GM10248 (cell line): ENCODE measurements at regions of chr6 and their contacts with region 1.

Region 1: DNA sequence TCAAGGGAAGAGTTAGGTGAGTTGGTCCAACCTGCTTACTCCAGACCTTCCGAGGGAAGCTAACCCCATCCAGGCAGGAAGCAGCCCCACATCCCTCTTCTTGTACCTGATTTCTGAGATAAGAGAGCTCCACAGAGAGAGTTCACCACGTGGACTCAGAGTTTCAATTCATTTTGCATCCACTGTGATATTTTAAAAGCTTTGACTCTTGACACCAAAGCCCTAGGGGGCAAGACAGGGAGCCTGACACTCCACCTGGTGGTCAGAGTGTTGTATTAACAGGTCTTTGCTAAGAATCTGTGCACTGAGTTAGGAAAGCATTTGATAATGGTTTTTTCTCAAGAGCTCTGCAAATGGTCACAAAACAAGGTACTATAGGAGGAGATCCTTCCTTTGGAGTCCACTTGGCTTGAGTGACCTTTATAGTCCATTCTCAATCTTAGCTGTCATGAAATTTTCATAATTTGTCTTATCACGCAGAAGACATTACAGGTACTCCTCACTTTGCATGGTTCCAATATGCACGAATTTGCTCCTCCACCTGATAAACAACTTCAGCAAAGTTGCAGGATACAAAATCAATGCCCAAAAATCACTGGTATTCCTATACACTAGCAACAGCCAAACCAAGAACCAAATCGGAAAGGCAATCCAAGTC is 56.2 kb upstream of the RIPOR2 start:
- DNase-seq: peak; percentile 68
- CTCF ChIP-seq: peak; percentile 79

Region 2: GRCh38 chr6:24864343-24864742 is 127.6 kb before region 1 on chr6:
- CTCF ChIA-PET with region 1: interaction called, 18 read pairs
- POLR2A ChIA-PET with region 1: no interaction called
- DNase-seq: no peak
- CTCF ChIP-seq: no peak

Region 3: DNA sequence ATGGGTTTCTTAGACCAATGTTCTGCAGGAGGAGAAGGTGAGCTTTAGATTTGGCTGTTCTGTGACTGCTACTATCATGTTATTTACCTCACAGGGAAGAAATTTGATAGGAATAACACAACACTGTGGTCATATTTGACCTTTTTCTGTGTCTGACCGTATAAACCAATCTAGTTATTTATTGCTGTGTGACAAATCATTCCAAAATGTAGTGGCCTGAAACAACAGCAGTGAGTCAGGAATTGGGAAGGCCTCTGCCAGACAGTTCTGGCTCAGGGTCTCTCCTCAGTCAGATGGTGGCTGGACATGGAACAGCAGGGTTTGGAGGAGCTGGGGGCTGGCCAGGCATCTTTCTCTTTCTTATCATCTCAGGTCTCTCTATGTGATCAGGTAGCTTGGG is 89.2 kb before region 1 on chr6:
- CTCF ChIA-PET with region 1: interaction called, 24 read pairs
- POLR2A ChIA-PET with region 1: no interaction called
- DNase-seq: no peak
- CTCF ChIP-seq: no peak

Region 4: DNA sequence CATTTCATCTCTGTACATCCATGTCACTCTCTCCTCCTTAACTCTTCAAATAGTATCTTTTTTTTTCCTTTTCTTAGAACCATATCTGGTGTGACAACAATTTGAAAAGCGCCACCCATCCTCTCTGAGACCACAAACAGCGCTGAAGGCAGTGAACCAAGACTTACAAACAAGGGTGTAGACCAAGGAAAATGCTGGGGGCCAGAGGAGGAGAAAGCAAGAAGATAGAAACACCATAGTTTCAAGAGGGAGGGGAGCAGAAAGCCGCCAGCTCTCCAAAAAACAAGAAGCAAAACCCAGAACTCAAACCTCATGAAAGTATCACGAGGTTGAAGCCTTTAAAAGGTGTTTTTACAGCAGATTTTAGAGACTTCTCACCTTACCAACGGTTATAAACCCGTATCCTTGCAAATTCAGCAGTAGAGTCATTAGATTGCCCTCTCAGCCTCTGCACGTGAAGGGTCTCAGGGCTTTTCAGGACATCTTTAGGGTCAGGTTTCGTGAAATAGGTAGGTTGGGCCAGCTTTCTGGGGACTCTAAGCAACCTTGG is 42.8 kb before region 1 on chr6:
- CTCF ChIA-PET with region 1: interaction called, 16 read pairs
- POLR2A ChIA-PET with region 1: no interaction called
- DNase-seq: peak; percentile 72
- CTCF ChIP-seq: no peak

Region 5: GRCh38 chr6:25006565-25007001 is 14.6 kb after region 1 on chr6:
- CTCF ChIA-PET with region 1: interaction called, 67 read pairs
- POLR2A ChIA-PET with region 1: no interaction called
- DNase-seq: peak; percentile 26
- CTCF ChIP-seq: no peak

Region 6: GRCh38 chr6:25070547-25071366 is 78.8 kb after region 1 on chr6:
- CTCF ChIA-PET with region 1: interaction called, 16 read pairs
- POLR2A ChIA-PET with region 1: no interaction called
- DNase-seq: peak; percentile 69
- CTCF ChIP-seq: peak; percentile 78